Activated naive CD4-positive, alpha-beta T cell treated with anti-CD3 and anti-CD28 coated beads, Interleukin-2, amount 10 ng/mL, durations not matched to agents 7 days and 5 days (primary cell): ENCODE measurements at regions of chr12 and their contacts with region 1.

Region 1: DNA sequence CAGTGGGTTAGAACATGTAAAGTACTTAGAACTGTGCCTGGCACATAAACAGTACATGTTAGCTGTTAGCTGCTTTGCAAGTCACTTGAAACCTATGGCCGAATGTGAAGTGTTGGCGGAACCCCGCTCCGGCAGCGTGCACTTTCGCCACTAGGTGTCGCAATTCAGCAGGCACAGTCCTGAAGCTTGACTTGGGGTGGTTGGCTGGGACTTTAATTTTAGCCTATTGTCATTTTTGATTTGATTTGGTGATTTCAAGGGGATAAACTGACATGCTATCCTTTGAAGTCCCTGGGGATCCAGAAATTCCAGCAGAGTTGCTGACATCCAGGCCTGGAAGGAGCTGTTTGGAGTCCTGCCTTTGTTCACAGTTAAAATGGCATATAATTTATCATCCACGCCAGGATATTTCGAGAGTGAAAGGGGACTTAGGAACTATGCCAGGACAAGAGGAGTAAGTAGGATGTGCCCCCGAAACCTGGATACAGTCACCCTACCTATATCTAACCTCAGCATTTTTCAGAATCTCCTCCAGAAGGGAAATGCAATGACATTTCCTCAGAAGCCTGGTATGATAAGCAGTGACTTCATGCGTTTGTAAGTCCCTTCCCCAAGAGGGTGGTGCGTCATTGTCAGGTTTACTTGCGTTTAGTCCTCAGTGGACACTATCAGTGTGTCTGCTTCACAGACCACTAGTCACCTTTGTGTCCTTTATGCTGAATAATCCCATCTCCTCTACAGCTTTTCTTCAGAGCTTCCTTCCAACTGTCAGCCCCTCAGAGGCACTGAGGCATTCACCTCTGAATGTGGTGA is 3.5 kb upstream of the TSPAN9 start:
- DNase-seq: peak; percentile 88
- H3K4me3 Mint-ChIP-seq: no peak overlapping the region
- H3K27ac Mint-ChIP-seq: no peak overlapping the region
- H3K4me1 Mint-ChIP-seq: peaks cover 15% of the 10 kb centered on the region
- H3K27me3 Mint-ChIP-seq: peaks cover 58% of the 10 kb centered on the region

Region 2: GRCh38 chr12:3202734-3203446 is 129.2 kb after region 1 on chr12:
- CTCF ChIA-PET with region 1: interaction called, 16 read pairs
- DNase-seq: peak; percentile 74
- H3K4me3 Mint-ChIP-seq: no peak overlapping the region
- H3K27ac Mint-ChIP-seq: no peak overlapping the region
- H3K4me1 Mint-ChIP-seq: peaks cover 7% of the 10 kb centered on the region
- H3K27me3 Mint-ChIP-seq: peaks cover 59% of the 10 kb centered on the region

Region 3: DNA sequence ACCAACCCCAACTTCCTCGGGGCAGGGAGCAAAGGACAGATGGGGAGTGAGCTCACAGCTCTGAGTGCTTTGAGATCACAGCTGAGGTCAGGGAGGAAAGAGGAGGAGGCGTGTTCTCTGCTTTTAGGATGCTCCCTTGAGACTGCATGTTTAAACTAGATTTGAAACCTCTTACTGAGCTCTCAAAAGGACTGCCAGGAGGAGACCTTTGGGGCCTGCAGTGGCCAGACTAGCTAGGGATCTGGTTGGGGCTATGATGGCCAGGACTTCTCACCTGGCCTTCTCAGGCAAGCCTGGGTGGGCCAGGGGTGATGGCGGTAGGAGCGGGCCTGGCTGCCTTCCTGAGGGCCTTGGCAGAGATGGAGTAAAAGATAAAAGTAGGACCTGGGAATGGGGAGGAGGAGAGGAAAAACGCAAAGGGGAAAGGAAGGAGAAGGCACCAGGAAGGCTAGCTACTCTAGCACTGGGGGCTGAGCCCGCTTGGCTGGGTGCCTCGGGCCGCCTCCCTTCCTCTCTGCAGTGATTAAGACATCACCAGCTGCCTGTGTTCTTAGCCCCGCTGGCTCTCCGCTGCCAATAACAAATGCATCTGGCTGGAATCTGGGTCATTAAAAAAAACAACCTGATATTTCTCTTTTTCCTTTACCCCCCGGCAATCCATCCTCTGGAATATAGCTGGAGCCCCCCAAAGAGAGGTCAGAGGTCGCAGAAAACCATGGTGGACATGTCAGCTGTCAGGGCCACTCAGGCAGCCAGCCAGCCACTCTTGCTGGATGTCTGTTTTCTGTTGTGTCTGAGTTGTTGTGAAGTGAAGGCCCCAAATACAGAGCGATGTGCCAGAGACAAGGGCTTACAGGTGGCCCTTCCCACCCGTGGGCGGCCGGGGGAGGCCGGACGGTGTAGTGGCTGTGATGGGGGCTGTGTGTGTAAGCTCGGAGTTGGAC is 144.9 kb after region 1 on chr12:
- CTCF ChIA-PET with region 1: no interaction called
- DNase-seq: no peak
- H3K4me3 Mint-ChIP-seq: no peak overlapping the region
- H3K27ac Mint-ChIP-seq: no peak overlapping the region
- H3K4me1 Mint-ChIP-seq: no peaks in the 10 kb centered on the region
- H3K27me3 Mint-ChIP-seq: peaks cover 9% of the 10 kb centered on the region

Region 4: GRCh38 chr12:3275171-3276041 is 201.8 kb after region 1 on chr12:
- CTCF ChIA-PET with region 1: interaction called, 40 read pairs
- DNase-seq: peak; percentile 78
- H3K4me3 Mint-ChIP-seq: no peak overlapping the region
- H3K27ac Mint-ChIP-seq: no peak overlapping the region
- H3K4me1 Mint-ChIP-seq: peaks cover 2% of the 10 kb centered on the region
- H3K27me3 Mint-ChIP-seq: peaks cover 22% of the 10 kb centered on the region